ENCODE measurements at regions of chrX and their contacts with region 1.

Region 1: GRCh38 chrX:40097497-40098263 is at the start of gene BCOR:
- ATAC-seq: peak; percentile 32 to 46 (median 40)
- H3K4me3 ChIP-seq: peak within 1 kb of the TSS; percentile 57 to 97 (median 73)
- H3K27ac ChIP-seq: peak within 1 kb of the TSS; percentile 90 to 95
- H3K4me1 ChIP-seq: peaks cover 39 to 41% of the 10 kb centered on the region in 2 donors
- total RNA-seq, gene BCOR: 12.1 to 102 (median 42.6) TPM

Region 2: GRCh38 chrX:39969099-39969818 is 128.4 kb before region 1 on chrX:
- in situ Hi-C with region 1: no loop called
- ATAC-seq: peak in 5 of 8 experiments; percentile 83 to 93 (median 90)
- H3K4me3 ChIP-seq: no peak overlapping the region
- H3K27ac ChIP-seq: peak overlapping the region; percentile 10 to 69
- H3K4me1 ChIP-seq: peaks cover 18 to 19% of the 10 kb centered on the region in 2 donors

Region 3: DNA sequence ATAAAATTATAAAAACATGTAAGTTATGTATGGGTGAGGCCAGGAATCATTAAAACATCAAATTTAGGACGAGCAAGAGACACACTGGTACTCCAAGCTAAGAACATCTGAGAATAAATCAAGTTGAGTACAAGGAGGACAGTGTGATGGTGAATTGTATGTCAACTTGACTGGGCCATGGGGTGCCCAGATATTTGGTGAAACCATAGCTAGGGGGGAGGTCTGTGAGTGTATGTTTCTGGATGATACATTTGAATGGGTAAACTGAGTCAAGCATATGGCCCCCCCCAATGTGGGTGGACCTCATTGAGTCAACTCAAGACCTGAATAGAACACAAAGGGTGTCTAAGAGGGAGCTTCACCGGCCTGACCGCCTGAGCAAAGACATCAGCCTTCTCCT is 115.4 kb after region 1 on chrX:
- in situ Hi-C with region 1: no loop called
- ATAC-seq: no peak
- H3K4me3 ChIP-seq: no peak overlapping the region
- H3K27ac ChIP-seq: no peak overlapping the region
- H3K4me1 ChIP-seq: no peaks in the 10 kb centered on the region

Region 4: GRCh38 chrX:40266490-40267333 is 169.0 kb after region 1 on chrX:
- in situ Hi-C with region 1: loop called in 1 of 9 experiments (anchors 25 kb)
- ATAC-seq: peak; percentile 88 to 98 (median 90)
- H3K4me3 ChIP-seq: peak overlapping the region; percentile 7 to 34 (median 23)
- H3K27ac ChIP-seq: no peak overlapping the region
- H3K4me1 ChIP-seq: peaks cover 18% of the 10 kb centered on the region in 2 donors

Region 5: GRCh38 chrX:40366661-40367060 is 269.0 kb after region 1 on chrX:
- in situ Hi-C with region 1: no loop called
- ATAC-seq: no peak
- H3K4me3 ChIP-seq: no peak overlapping the region
- H3K27ac ChIP-seq: no peak overlapping the region
- H3K4me1 ChIP-seq: no peaks in the 10 kb centered on the region

Measured in motor neuron (in vitro differentiated cells).